Left ventricle myocardium superior (tissue), 1 donor: ENCODE measurements at regions of chr1 and their contacts with region 1.

Region 1: DNA sequence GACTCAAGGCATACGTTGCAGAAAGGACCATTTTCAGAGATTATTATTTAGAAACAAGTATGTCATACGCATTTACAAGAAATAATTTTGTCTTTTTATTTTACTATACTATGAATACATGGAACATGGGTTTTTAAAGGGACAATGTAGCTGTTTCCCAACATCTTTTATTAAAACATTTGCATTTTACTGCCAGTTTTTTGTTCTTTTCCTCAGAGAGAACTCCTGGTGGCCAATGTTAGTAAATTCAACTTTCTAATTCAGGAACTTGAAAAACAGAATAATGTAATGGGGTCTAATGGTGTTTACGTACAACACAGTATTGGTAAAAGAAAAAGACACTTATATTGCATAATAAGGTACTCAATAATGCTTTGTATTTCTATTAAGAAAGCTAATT is 14.9 kb downstream of the PRDM2 start:
- DNase-seq: no peak
- ATAC-seq: no peak

Region 2: DNA sequence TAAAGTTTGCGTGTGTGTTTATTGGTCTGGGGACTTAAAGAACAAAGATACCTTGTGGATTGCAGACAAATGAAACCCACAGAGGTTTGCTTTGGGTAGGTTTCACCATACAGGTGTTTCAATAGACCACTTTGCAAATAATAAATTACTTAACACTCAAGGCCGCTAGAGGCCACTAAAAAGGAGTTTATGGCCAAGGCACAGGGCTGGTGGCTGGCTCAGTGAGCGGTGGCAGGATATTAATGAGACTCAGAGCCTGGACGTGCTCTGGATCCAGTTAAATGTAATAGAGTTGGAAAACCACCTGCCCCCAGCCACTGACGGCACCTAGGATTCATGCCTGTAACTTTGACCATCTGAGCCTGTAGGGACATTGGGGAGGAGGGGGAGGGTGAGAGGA is 245.5 kb before region 1 on chr1:
- intact Hi-C with region 1: no loop called
- DNase-seq: peak; percentile 50
- ATAC-seq: peak; percentile 74

Region 3: GRCh38 chr1:13583966-13584791 is 130.7 kb before region 1 on chr1:
- intact Hi-C with region 1: loop called (anchors 5 kb)
- DNase-seq: peak; percentile 71
- ATAC-seq: peak; percentile 83